Endothelial cell of umbilical vein (primary cell): ENCODE measurements at regions of chr9 and their contacts with region 1.

Region 1: DNA sequence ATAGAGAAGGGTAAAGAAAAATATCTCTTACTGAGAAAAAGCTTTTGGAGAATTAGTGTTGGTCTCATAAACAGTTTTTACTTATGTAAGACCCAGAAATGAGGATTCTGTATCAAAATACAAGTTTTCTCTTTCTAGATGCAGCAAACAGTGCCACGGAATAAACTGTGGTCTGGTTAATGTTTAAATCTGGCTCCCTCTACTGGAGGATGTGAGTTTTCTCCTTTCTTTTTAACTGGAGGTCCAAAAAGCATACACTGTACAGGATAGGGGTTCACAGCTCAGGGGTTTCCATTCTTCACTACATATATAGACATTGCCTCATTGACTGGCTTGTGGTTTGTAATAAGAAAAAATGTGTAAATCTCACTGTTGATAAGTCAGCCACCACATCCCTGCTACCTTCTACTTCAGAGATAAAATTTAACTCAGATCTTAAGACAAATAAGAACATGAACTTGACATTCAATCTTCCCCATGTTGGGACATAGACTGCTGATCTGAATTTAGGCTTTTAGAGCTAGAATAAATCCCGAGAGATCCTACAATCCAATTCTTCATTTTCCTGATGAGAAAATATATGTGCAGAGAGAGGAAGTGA is 98.9 kb downstream of the CFAP95 start:
- DNase-seq: peak; percentile 60
- H3K4me3 ChIP-seq: no peak overlapping the region
- H3K27ac ChIP-seq: no peak overlapping the region
- H3K4me1 ChIP-seq: peaks cover 5% of the 10 kb centered on the region
- H3K27me3 ChIP-seq: peaks cover 29 to 39% of the 10 kb centered on the region in 2 experiments
- CTCF ChIP-seq: peak; percentile 49 to 53
- POLR2A ChIP-seq: no peak

Region 2: DNA sequence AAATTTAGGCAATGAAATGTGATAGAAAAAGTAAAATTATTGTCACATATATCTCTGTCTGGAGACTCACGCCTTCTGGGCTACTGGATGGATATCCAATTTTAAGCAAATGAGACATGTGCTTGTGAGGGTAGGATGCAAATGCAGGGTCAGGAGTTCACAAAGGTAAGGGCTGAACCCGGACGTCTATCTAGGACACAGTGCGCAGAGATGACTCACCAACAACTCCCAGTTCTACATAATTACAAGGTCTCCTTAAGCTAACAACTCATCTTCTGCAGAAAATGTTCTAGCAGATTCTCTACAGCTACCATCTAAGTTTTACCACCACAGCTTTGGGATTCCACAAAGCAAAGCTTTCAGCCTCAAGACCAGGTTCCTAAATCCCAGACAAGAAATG is 434.1 kb before region 1 on chr9:
- CTCF ChIA-PET with region 1: no interaction called
- POLR2A ChIA-PET with region 1: no interaction called
- dilution Hi-C with region 1: no loop called
- intact Hi-C with region 1: no loop called
- DNase-seq: no peak
- H3K4me3 ChIP-seq: no peak overlapping the region
- H3K27ac ChIP-seq: no peak overlapping the region
- H3K4me1 ChIP-seq: no peaks in the 10 kb centered on the region
- H3K27me3 ChIP-seq: no peaks in the 10 kb centered on the region
- CTCF ChIP-seq: no peak
- POLR2A ChIP-seq: no peak

Region 3: GRCh38 chr9:69549310-69550202 is 370.0 kb before region 1 on chr9:
- CTCF ChIA-PET with region 1: interaction called, 3 read pairs
- POLR2A ChIA-PET with region 1: no interaction called
- dilution Hi-C with region 1: no loop called
- intact Hi-C with region 1: loop called (anchors 5 kb)
- DNase-seq: peak; percentile 67
- H3K4me3 ChIP-seq: no peak overlapping the region
- H3K27ac ChIP-seq: no peak overlapping the region
- H3K4me1 ChIP-seq: no peaks in the 10 kb centered on the region
- H3K27me3 ChIP-seq: peaks cover 6 to 8% of the 10 kb centered on the region in 2 experiments
- CTCF ChIP-seq: peak; percentile 79 to 87
- POLR2A ChIP-seq: no peak

Region 4: GRCh38 chr9:69809304-69809863 is 110.2 kb before region 1 on chr9:
- CTCF ChIA-PET with region 1: interaction called, 91 read pairs
- POLR2A ChIA-PET with region 1: no interaction called
- dilution Hi-C with region 1: no loop called
- intact Hi-C with region 1: loop called (anchors 1 kb)
- DNase-seq: peak; percentile 36
- H3K4me3 ChIP-seq: no peak overlapping the region
- H3K27ac ChIP-seq: no peak overlapping the region
- H3K4me1 ChIP-seq: no peaks in the 10 kb centered on the region
- H3K27me3 ChIP-seq: peaks cover 41 to 46% of the 10 kb centered on the region in 2 experiments
- CTCF ChIP-seq: peak; percentile 33 to 35
- POLR2A ChIP-seq: no peak

Region 5: GRCh38 chr9:69877854-69878514 is 41.6 kb before region 1 on chr9:
- CTCF ChIA-PET with region 1: interaction called, 5 read pairs
- POLR2A ChIA-PET with region 1: no interaction called
- dilution Hi-C with region 1: no loop called
- intact Hi-C with region 1: loop called (anchors 1 kb)
- DNase-seq: peak; percentile 53
- H3K4me3 ChIP-seq: no peak overlapping the region
- H3K27ac ChIP-seq: no peak overlapping the region
- H3K4me1 ChIP-seq: peaks cover 14% of the 10 kb centered on the region
- H3K27me3 ChIP-seq: peaks cover 3 to 9% of the 10 kb centered on the region in 2 experiments
- CTCF ChIP-seq: peak; percentile 27 to 30
- POLR2A ChIP-seq: no peak

Region 6: DNA sequence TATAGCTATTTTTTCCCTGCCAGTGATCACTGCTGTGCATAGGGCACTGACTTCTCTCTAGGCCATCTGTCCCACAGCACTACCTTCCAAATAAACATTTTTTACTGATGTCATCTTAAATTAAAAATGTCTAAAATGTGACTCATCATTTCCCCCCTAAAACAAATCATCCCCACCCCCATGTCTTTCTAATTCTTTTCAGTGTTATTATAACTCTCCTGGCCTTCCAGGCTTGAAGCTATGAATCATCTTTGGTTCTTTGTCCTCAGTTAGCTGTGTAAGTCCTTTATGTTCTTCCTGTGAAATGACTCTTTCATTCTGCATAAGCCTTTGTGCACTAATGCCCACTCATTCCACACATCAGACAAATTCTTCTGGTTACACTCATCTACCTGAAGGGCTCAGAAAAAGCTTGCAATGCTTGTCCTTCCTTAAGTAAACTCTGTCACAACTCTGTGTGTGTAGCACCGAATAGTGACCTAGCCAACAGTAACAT is 20.8 kb before region 1 on chr9:
- CTCF ChIA-PET with region 1: interaction called, 23 read pairs
- POLR2A ChIA-PET with region 1: no interaction called
- dilution Hi-C with region 1: no loop called
- intact Hi-C with region 1: no loop called
- DNase-seq: peak; percentile 95
- H3K4me3 ChIP-seq: peak overlapping the region in 1 of 3 experiments; percentile 12
- H3K27ac ChIP-seq: peak overlapping the region; percentile 94
- H3K4me1 ChIP-seq: peaks cover 32% of the 10 kb centered on the region
- H3K27me3 ChIP-seq: no peaks in the 10 kb centered on the region
- CTCF ChIP-seq: no peak
- POLR2A ChIP-seq: peak; percentile 75